HEK293 (cell line): ENCODE measurements at regions of chr3 and their contacts with region 1.

Region 1: GRCh38 chr3:128698211-128699064 is 27.5 kb upstream of the RAB7A start:
- H3K4me3 ChIP-seq: peak overlapping the region; percentile 25; the same call in 1 of the 2 replicates
- H3K27ac ChIP-seq: no peak overlapping the region
- H3K4me1 ChIP-seq: no peaks in the 10 kb centered on the region
- CTCF ChIP-seq: no peak

Region 2: DNA sequence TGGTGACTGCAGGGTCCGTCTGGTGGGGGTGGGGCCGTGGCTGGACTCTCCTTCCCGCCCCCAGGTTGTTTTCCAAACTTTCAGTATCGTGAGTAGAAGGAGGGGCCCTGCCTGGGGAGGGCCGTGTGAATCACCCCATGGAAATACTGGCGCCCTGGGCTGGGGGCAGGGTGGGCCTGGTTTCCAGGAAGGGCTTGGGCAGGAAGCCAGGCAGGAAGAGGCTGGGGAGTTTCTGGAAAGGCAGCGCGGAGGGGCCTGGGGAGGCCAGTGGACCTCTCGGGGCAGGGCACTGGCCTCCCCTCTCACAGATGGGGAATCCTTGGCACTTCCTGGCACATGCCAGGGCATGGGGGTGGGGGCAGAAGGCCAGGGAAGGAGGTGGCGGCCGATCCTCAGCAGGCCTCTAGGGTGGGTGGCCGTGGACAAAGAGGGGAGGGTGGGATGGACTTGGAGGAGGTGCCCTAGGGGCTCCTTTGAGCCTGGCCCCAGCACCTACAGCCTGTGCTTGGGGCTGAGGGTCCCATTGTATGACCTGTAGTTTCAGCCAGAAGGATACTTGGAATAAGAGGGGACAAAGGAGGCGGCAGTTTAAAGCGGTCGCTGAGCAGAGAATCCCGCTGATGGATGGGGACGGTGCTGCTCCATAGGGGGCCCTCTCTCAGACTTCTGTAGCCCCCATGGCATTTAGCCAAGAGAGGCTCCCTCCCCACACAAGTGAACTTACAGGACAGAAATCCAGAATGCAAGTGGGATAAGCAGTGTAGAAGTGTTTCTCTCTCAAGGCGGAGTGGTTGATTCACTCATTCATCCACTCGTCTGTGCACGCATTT is 148.9 kb before region 1 on chr3:
- CTCF ChIA-PET with region 1: no interaction called
- POLR2A ChIA-PET with region 1: no interaction called
- H3K4me3 ChIP-seq: no peak overlapping the region
- H3K27ac ChIP-seq: no peak overlapping the region
- H3K4me1 ChIP-seq: no peaks in the 10 kb centered on the region
- CTCF ChIP-seq: no peak

Region 3: DNA sequence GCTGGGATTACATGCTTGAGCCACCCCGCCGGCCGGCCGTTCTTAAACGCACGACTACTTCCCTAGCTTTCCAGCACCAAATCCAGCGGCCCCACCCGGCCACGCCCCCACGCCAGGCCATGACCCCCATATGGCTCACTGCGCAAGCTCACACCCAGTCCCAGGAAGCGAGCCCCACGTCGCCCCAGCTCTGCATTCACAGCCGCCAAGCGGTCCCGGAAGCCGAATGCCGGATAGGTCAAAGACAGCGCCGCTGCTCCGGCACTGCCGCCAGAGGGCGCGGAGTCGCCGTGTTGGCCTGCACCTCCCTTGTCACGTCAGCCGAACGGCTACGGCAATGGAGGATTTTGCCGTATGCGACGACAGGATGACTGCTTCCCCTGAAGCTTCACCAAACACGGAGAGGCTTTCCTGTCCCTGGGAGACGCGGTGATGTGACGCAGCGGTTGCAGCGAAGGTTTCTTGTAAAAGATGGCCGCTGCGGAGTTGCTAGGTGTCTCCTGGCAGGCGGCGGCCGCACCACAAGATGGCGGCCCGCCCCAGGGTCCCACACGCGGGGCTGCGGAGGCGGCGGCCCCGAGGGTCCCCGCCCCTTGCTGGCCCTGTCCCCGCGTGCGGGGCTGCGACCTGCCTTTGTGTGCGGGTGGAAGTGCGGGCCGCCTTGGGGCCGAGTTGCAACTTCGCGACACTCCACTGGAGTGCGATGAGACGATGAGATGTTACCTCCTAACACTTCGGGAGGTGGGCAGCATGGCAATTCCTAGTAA is 17.7 kb before region 1 on chr3:
- CTCF ChIA-PET with region 1: interaction called, 11 read pairs
- POLR2A ChIA-PET with region 1: interaction called, 4 read pairs
- H3K4me3 ChIP-seq: peak overlapping the region; percentile 77
- H3K27ac ChIP-seq: peak overlapping the region; percentile 61
- H3K4me1 ChIP-seq: no peaks in the 10 kb centered on the region
- CTCF ChIP-seq: peak; percentile 100

Region 4: DNA sequence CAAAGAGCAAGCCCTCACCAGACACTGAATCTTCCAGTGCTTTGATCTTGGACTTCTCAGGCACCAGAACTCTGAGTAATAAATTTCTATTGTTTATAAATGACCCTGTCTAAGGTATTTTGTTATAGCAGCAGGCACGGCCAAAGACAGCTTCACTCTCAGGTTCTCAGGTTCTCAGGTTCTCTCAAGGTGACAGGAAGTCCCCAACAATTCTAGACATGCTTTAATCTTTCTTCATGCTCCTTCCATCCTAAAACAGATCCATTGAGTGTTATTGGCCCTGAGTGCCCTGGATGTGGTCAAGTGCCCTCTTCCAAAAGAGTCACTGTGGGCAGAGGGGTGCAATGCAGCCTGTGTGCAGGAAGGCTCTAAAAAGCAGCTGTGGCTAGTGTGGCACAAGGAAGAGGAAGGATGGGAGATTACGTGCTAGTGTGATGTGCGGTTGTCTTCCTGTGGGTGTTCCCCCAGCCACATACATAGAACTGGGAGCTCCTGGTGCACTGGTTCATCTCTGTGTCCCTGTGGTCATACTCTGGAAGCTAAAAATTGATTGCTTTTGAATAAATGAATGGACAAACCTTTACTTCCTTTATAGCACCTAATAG is 16.6 kb after region 1 on chr3:
- CTCF ChIA-PET with region 1: no interaction called
- POLR2A ChIA-PET with region 1: interaction called, 14 read pairs
- H3K4me3 ChIP-seq: no peak overlapping the region
- H3K27ac ChIP-seq: no peak overlapping the region
- H3K4me1 ChIP-seq: no peaks in the 10 kb centered on the region
- CTCF ChIP-seq: no peak